ENCODE measurements at regions of chr3 and their contacts with region 1.

Region 1: GRCh38 chr3:146065573-146066006 is 95.4 kb downstream of the PLOD2 start:
- DNase-seq: peak in 1 of 5 donors; percentile 31
- H3K4me3 ChIP-seq: no peak overlapping the region
- H3K27ac ChIP-seq: no peak overlapping the region
- H3K4me1 ChIP-seq: no peaks in the 10 kb centered on the region
- H3K27me3 ChIP-seq: no peaks in the 10 kb centered on the region
- CTCF ChIP-seq: peak; percentile 46 to 72 (median 57)
- EP300 ChIP-seq: no peak
- POLR2A ChIP-seq: no peak

Region 2: GRCh38 chr3:146189519-146190173 is 124.1 kb after region 1 on chr3:
- intact Hi-C with region 1: loop called in 2 of 4 experiments (anchors 5 kb)
- DNase-seq: peak in 2 of 5 donors; percentile 18 to 22
- H3K4me3 ChIP-seq: no peak overlapping the region
- H3K27ac ChIP-seq: no peak overlapping the region
- H3K4me1 ChIP-seq: no peaks in the 10 kb centered on the region
- H3K27me3 ChIP-seq: no peaks in the 10 kb centered on the region
- CTCF ChIP-seq: peak; percentile 38 to 76 (median 61)
- EP300 ChIP-seq: no peak
- POLR2A ChIP-seq: no peak

Region 3: GRCh38 chr3:146326670-146327543 is 261.3 kb after region 1 on chr3:
- intact Hi-C with region 1: loop called in 2 of 4 experiments (anchors 10 kb)
- DNase-seq: peak; percentile 22 to 77 (median 47)
- H3K4me3 ChIP-seq: no peak overlapping the region
- H3K27ac ChIP-seq: no peak overlapping the region
- H3K4me1 ChIP-seq: no peaks in the 10 kb centered on the region
- H3K27me3 ChIP-seq: no peaks in the 10 kb centered on the region
- CTCF ChIP-seq: peak; percentile 14 to 77 (median 76)
- EP300 ChIP-seq: no peak
- POLR2A ChIP-seq: no peak

Region 4: GRCh38 chr3:146577662-146578061 is 512.1 kb after region 1 on chr3:
- intact Hi-C with region 1: loop called in 1 of 4 experiments (anchors 10 kb)
- DNase-seq: peak in 3 of 5 donors; percentile 14 to 58 (median 35)
- H3K4me3 ChIP-seq: no peak overlapping the region
- H3K27ac ChIP-seq: no peak overlapping the region
- H3K4me1 ChIP-seq: no peaks in the 10 kb centered on the region
- H3K27me3 ChIP-seq: no peaks in the 10 kb centered on the region
- CTCF ChIP-seq: peak in 2 of 3 donors; percentile 43 to 65
- EP300 ChIP-seq: no peak
- POLR2A ChIP-seq: no peak

Measured in ovary (tissue), 10 donors.